Heart left ventricle (tissue), 16 donors: ENCODE measurements at regions of chr18 and their contacts with region 1.

Region 1: DNA sequence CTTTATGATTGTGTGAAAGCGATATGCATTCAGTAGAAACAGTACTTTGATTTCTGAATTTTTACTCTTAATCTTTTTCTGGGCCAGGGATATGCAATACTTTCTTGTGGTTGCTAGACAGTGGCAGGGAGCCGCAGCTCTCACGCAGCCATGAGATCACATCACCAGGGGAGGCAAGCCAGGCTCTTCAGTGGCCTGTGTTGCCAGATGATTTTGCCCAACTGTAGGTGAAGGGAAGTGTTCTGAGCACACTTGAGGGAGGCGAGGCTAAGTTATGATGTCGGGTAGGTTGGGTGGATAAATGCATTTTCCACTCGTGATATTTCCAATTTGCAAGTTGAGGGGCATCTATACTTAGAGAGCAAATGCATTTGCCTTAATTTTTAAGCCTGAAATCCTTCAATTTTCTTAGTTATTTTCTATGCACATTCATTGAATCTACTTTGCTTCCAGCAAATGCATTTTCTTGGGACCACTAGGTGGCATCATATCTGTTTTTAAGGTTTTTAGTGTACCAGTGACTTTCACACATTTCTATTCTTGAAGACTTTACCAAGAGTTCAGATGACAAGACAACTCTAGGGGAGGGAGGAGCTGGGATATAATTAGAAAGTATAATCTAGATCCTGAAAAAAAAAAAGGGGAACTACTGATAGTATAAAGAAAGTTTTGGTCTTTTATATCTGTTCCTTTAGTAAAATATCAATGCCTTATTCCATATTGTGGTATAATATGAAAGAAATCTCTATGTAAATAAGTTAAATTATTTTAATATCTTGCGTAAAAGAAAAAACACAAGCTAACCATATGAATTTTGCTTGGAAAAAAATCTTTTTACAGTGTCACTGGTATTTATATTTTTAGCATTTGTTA is 643.3 kb downstream of the SOCS6 start:
- DNase-seq: no peak
- ATAC-seq: no peak
- H3K4me3 ChIP-seq: no peak overlapping the region
- H3K27ac ChIP-seq: no peak overlapping the region
- H3K4me1 ChIP-seq: no peaks in the 10 kb centered on the region
- H3K27me3 ChIP-seq: no peaks in the 10 kb centered on the region
- CTCF ChIP-seq: peak; percentile 18 to 65 (median 42)
- POLR2A ChIP-seq: no peak

Region 2: GRCh38 chr18:71036783-71037182 is 104.6 kb after region 1 on chr18:
- intact Hi-C with region 1: no loop called
- DNase-seq: no peak
- ATAC-seq: no peak
- H3K4me3 ChIP-seq: no peak overlapping the region
- H3K27ac ChIP-seq: no peak overlapping the region
- H3K4me1 ChIP-seq: no peaks in the 10 kb centered on the region
- H3K27me3 ChIP-seq: no peaks in the 10 kb centered on the region
- CTCF ChIP-seq: no peak
- POLR2A ChIP-seq: no peak

Region 3: GRCh38 chr18:72544092-72544886 is 1612.1 kb after region 1 on chr18 and contains the start of gene CBLN2:
- intact Hi-C with region 1: loop called in 4 of 10 experiments (anchors 10 kb)
- DNase-seq: peak in 2 of 5 donors; percentile 22 to 64
- ATAC-seq: peak in 3 of 4 donors; percentile 65 to 78 (median 72)
- H3K4me3 ChIP-seq: peak within 1 kb of the TSS in 9 of 12 donors; percentile 5 to 45 (median 23)
- H3K27ac ChIP-seq: no peak within 1 kb of the TSS
- H3K4me1 ChIP-seq: peaks cover 0 to 26% (median 0%) of the 10 kb centered on the region in 12 donors
- H3K27me3 ChIP-seq: peaks cover 7 to 73% (median 29%) of the 10 kb centered on the region in 9 donors
- CTCF ChIP-seq: peak in 11 of 12 donors; percentile 23 to 66 (median 47)
- POLR2A ChIP-seq: no peak
- total RNA-seq, gene CBLN2: 3.7 TPM in 1 of 9 donors, not detected in the others